Activated naive CD4-positive, alpha-beta T cell treated with anti-CD3 and anti-CD28 coated beads for 36 hours (primary cell): ENCODE measurements at regions of chr7 and their contacts with region 1.

Region 1: GRCh38 chr7:151782598-151783448 is 94.1 kb downstream of the PRKAG2 start:
- DNase-seq: peak; percentile 77
- H3K4me3 Mint-ChIP-seq: peak overlapping the region; percentile 77
- H3K27ac Mint-ChIP-seq: no peak overlapping the region
- H3K4me1 Mint-ChIP-seq: peaks cover 2% of the 10 kb centered on the region
- H3K27me3 Mint-ChIP-seq: no peaks in the 10 kb centered on the region

Region 2: GRCh38 chr7:151232091-151232916 is 550.5 kb before region 1 on chr7 and contains the start of gene CHPF2:
- CTCF ChIA-PET with region 1: no interaction called
- intact Hi-C with region 1: no loop called
- DNase-seq: peak; percentile 94
- H3K4me3 Mint-ChIP-seq: peak within 1 kb of the TSS; percentile 100
- H3K27ac Mint-ChIP-seq: peak within 1 kb of the TSS; percentile 99
- H3K4me1 Mint-ChIP-seq: peaks cover 35% of the 10 kb centered on the region
- H3K27me3 Mint-ChIP-seq: no peaks in the 10 kb centered on the region
- total RNA-seq, gene CHPF2: 21.0 TPM

Region 3: DNA sequence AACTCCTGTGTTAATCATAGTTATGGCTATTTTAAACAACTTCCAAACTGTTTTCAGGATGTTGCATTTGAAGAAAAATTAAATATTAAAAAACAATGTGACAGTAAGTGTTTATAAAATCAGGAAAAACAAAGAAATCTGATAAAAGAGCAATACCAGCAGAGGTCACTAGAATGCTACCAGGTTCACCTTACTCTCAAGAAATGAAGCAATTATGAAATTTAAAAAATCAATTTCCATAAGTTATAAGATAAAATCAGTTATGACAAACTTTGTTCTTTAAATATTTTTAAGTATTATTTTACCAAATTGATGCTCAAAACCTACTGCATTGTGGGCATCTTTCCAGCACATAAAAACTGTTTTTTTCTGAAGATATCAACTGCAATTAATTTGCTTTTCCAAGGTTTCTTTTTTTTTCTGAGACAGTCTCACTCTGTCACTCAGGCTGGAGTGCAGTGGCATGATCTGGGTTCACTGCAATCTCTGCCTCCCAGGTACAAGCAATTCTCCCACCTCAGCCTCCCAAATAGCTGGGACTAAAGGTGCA is 212.4 kb before region 1 on chr7:
- CTCF ChIA-PET with region 1: interaction called, 4 read pairs
- intact Hi-C with region 1: loop called (anchors 1 kb)
- DNase-seq: no peak
- H3K4me3 Mint-ChIP-seq: no peak overlapping the region
- H3K27ac Mint-ChIP-seq: no peak overlapping the region
- H3K4me1 Mint-ChIP-seq: no peaks in the 10 kb centered on the region
- H3K27me3 Mint-ChIP-seq: no peaks in the 10 kb centered on the region

Region 4: DNA sequence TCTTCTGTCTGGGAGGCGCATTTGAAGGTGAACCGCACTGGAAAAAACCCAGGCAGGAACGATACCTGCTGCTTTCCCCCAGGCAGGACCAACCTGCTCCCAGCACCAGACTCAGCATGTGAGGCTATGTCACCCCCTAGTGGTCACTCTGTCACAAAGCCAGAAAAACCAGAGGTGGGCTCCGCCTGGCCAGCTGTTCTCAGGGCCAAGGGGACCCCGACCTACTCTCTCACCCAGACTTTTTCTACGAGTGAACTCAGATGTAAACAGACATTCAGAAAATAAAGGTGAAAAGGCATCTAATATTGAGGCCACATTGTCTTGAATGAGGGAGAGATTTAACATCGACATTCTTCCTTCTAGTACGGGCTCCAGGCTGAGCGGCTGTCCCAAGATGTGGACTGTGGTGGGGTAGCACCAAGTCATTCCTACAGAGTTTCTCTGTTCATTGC is 23.2 kb before region 1 on chr7:
- CTCF ChIA-PET with region 1: interaction called, 25 read pairs
- intact Hi-C with region 1: loop called (anchors 1 kb)
- DNase-seq: peak; percentile 75
- H3K4me3 Mint-ChIP-seq: no peak overlapping the region
- H3K27ac Mint-ChIP-seq: no peak overlapping the region
- H3K4me1 Mint-ChIP-seq: peaks cover 22% of the 10 kb centered on the region
- H3K27me3 Mint-ChIP-seq: no peaks in the 10 kb centered on the region

Region 5: GRCh38 chr7:151851145-151851751 is 68.4 kb after region 1 on chr7:
- CTCF ChIA-PET with region 1: interaction called, 14 read pairs
- intact Hi-C with region 1: no loop called
- DNase-seq: peak; percentile 62
- H3K4me3 Mint-ChIP-seq: peak overlapping the region; percentile 56
- H3K27ac Mint-ChIP-seq: peak overlapping the region; percentile 62
- H3K4me1 Mint-ChIP-seq: peaks cover 26% of the 10 kb centered on the region
- H3K27me3 Mint-ChIP-seq: no peaks in the 10 kb centered on the region

Region 6: DNA sequence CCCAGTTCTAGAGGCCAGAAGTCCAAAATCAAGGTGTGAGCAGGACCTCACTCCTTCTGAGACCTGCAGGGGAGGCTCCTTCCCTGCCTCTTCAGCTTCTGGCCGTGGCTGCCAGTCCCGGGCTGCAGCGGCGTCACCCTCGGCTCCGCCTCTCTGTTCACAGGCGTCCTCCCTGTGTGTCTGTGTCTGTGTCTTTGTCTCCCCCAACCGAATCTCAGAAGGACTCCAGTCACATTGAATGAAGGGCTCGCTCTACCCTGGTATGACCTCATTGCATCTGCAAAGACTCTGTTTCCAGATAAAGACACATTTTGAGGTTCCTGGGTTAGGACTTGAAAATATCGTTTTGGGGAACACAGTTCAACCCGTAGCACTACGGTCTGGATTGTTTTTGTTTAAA is 209.6 kb after region 1 on chr7:
- CTCF ChIA-PET with region 1: interaction called, 3 read pairs
- intact Hi-C with region 1: loop called (anchors 10 kb)
- DNase-seq: peak; percentile 70
- H3K4me3 Mint-ChIP-seq: no peak overlapping the region
- H3K27ac Mint-ChIP-seq: no peak overlapping the region
- H3K4me1 Mint-ChIP-seq: peaks cover 7% of the 10 kb centered on the region
- H3K27me3 Mint-ChIP-seq: peaks cover 8% of the 10 kb centered on the region

Region 7: DNA sequence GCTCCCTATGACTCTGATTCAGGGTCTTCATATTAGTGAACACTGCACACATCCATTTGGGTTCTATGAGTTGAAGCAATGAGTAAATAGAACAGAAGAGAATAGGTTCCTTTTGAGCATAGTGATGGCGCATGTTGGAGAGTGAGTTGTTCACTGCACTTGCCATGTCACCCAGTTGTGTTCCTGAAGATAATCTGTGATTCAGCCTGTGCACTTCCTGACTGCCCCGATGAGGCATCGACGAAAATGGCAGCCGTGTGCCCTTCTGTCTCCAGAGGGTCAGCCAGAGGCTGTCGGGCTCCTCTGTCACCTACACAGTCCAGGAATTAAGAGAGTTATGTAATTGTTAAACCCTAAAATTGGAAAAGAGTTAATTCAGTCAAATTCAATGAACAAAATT is 337.4 kb after region 1 on chr7:
- CTCF ChIA-PET with region 1: no interaction called
- intact Hi-C with region 1: no loop called
- DNase-seq: no peak
- H3K4me3 Mint-ChIP-seq: no peak overlapping the region
- H3K27ac Mint-ChIP-seq: no peak overlapping the region
- H3K4me1 Mint-ChIP-seq: peaks cover 9% of the 10 kb centered on the region
- H3K27me3 Mint-ChIP-seq: no peaks in the 10 kb centered on the region

Region 8: GRCh38 chr7:152709287-152710152 is 926.7 kb after region 1 on chr7:
- CTCF ChIA-PET with region 1: no interaction called
- intact Hi-C with region 1: loop called (anchors 5 kb)
- DNase-seq: no peak
- H3K4me3 Mint-ChIP-seq: no peak overlapping the region
- H3K27ac Mint-ChIP-seq: no peak overlapping the region
- H3K4me1 Mint-ChIP-seq: no peaks in the 10 kb centered on the region
- H3K27me3 Mint-ChIP-seq: no peaks in the 10 kb centered on the region